Posterior vena cava (tissue), 2 donors: ENCODE measurements at regions of chr4 and their contacts with region 1.

Region 1: DNA sequence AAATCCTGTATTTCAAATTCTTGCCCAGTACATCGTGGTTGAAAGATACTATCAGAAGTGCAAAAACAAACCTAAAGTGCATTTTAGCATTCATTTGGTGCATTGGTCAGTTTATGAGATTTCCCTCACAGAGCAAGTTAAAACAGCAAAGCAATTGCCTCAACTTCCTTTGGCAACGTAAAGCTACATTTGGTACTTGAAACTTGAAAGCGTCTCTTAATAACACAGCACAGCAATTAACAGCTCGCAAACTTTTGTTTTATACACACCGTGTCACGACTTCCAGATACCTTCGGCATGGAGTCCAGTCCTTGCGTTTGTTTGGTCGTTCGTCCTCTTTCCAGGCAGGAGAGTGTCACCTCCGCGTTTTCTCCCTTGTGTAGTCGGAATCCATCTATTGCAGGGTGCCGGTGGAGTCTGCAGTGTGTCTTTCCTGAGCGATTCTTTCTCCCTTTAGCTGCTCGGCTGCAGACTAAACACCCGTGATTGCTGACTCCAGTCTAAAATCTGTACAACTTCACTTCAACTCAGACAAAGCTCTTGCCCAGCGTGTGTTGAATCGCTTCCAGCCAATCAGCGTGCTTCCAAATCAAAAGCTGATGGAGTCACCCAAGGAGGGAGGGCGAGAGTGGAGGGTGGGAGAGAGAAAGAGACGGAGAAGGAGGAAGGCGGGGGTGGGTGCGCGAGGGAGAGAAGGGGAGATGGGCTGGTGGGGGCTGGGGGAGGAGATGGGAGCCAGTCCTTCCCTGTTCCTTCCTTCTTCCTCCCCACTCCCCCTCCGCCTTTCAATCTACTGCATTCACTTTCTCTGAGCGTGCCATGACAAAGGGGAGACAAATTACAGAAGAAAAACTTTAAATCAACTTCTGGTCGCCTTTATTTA is at the start of gene PCDH18:
- DNase-seq: peak; percentile 95
- total RNA-seq, gene PCDH18: 19.6 to 33.7 TPM

Region 2: DNA sequence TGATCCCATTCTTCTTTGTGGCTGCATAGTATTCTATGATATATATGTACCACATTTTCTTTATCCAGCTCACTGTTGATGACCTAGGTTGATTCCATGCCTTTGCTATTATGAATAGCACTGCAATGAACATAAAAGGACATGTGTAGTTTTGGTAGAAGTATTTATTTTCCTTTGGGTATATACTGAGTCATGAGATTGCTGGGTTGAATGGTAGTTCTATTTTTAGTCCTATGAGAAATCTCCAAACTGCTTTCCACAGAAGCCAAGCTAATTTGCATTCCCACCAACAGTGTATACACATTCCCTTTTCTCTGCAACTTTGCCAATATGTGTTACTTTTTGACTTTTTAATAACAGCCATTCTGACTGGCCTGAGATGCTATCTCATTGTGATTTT is 278.3 kb before region 1 on chr4:
- intact Hi-C with region 1: loop called in 1 of 2 experiments (anchors 10 kb)
- DNase-seq: no peak

Region 3: DNA sequence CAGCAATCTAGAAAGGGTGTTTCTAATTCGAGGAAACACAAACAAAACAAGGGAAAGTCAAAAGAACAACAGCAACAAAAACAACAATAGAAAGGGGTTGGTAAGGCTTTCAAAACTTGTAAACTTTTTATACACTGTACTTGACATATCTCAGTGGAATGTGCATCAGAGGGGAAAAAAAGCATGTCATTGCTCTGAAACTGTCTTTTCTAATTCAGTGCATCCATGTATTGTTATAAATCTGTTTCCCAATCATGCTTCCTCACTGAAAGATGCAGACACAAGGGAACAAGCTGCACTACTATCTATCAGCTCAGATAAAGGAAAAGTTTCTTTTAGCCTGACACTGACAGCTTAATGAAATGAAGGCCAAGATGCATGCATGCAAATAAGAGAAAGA is 44.2 kb after region 1 on chr4:
- intact Hi-C with region 1: no loop called
- DNase-seq: no peak

Region 4: DNA sequence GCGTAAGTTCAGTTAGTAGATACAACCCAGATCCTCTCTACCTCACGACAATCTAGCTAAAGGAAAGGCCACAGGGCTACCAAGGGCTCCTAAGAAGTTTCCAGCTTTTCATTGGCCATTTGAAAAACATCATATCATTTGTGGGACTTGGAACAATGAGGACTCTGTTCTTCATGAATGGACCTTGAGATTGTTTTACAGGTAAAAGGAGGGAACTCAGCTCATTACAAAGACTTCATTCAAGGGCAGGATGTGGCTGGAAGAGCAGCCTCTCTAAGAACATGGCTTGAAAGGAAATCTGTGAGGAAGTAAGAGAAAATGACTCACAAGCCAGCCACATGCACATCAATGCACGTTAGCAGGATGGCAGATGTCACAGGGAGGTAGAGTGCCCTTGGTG is 815.8 kb after region 1 on chr4:
- intact Hi-C with region 1: no loop called
- DNase-seq: no peak